Activated T-helper 1 cell treated with anti-CD3 and anti-CD28 coated beads, Interleukin-12 subunit alpha, Interleukin-12 subunit beta, Interleukin-2, Interleukin-4 antibody, amounts not matched to agents 30 ng/mL and 10 ng/mL and 1 ng/mL, durations not matched to agents 14 hours and 24 hours and 36 hours (primary cell): ENCODE measurements at regions of chr14 and their contacts with region 1.

Region 1: DNA sequence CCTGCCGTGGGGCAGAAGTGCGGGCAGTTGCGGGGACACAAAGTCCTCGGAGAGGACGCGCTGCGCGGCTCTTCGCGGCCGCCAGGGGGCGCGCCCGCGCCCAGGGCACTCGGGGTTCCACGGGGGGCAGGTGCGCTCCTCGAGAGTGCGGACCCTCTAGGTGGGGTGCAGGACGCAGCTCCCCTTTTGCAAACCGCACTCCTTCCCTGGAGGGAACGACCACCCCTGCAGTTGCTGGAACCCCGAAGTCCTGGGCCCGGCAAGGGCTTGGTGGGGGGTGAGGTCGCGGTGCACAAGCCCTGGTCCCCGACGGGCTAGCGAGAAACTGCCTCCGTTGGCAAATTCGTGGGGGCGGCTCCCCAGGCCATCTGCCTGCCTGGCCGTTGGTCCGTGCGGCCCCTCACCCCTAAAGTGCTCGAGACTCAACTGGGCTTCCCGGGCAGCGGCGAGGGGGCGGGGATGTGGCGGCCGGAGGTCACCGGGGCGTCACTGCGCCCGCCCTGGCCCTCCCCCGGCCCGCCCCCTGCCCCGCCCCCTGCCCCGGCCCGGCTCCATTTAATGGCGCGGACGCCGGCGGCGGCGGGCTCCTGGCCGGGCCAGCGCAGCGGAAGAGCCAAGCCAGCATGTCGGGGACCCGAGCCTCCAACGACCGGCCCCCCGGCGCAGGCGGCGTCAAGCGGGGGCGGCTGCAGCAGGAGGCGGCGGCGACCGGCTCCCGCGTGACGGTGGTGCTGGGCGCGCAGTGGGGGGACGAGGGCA is at the start of gene ADSS1:
- DNase-seq: peak; percentile 50
- H3K4me3 Mint-ChIP-seq: peak within 1 kb of the TSS; percentile 59
- H3K27ac Mint-ChIP-seq: no peak within 1 kb of the TSS
- H3K4me1 Mint-ChIP-seq: no peaks in the 10 kb centered on the region
- H3K27me3 Mint-ChIP-seq: no peaks in the 10 kb centered on the region
- total RNA-seq, gene ADSS1: 1.1 and 1.2 TPM in 2 replicates

Region 2: GRCh38 chr14:104689109-104689880 is 34.5 kb before region 1 on chr14 and contains the start of gene INF2:
- intact Hi-C with region 1: loop called (anchors 2 kb)
- DNase-seq: peak; percentile 27
- H3K4me3 Mint-ChIP-seq: peak within 1 kb of the TSS; percentile 85
- H3K27ac Mint-ChIP-seq: no peak within 1 kb of the TSS
- H3K4me1 Mint-ChIP-seq: peaks cover 44% of the 10 kb centered on the region
- H3K27me3 Mint-ChIP-seq: no peaks in the 10 kb centered on the region
- total RNA-seq, gene INF2: 86.6 and 91.6 TPM in 2 replicates